RWPE1 (cell line): ENCODE measurements at regions of chr1 and their contacts with region 1.

Region 1: GRCh38 chr1:99858286-99858685 is 8.1 kb downstream of the AGL start:
- DNase-seq: no peak
- H3K27ac ChIP-seq: no peak overlapping the region
- CTCF ChIP-seq: no peak

Region 2: GRCh38 chr1:99886841-99887240 is 28.6 kb after region 1 on chr1:
- CTCF ChIA-PET with region 1: no interaction called
- POLR2A ChIA-PET with region 1: no interaction called
- DNase-seq: no peak
- H3K27ac ChIP-seq: no peak overlapping the region
- CTCF ChIP-seq: no peak

Region 3: GRCh38 chr1:99969729-99970621 is 111.7 kb after region 1 on chr1 and contains the start of gene SLC35A3:
- CTCF ChIA-PET with region 1: no interaction called
- POLR2A ChIA-PET with region 1: interaction called, 12 read pairs
- DNase-seq: peak; percentile 71
- H3K27ac ChIP-seq: peak within 1 kb of the TSS; percentile 83
- CTCF ChIP-seq: no peak